Activated B cell treated with CpG ODN at 0.5 μM for 24 hours (primary cell): ENCODE measurements at regions of chr14 and their contacts with region 1.

Region 1: GRCh38 chr14:20632682-20633428 is 8.6 kb downstream of the OR6S1 start:
- DNase-seq: no peak
- ATAC-seq: peak; percentile 72
- H3K4me3 Mint-ChIP-seq: peak overlapping the region; percentile 82
- H3K27ac Mint-ChIP-seq: peak overlapping the region; percentile 89
- H3K4me1 Mint-ChIP-seq: peaks cover 50% of the 10 kb centered on the region
- H3K27me3 Mint-ChIP-seq: peaks cover 30% of the 10 kb centered on the region
- CTCF ChIP-seq: no peak

Region 2: DNA sequence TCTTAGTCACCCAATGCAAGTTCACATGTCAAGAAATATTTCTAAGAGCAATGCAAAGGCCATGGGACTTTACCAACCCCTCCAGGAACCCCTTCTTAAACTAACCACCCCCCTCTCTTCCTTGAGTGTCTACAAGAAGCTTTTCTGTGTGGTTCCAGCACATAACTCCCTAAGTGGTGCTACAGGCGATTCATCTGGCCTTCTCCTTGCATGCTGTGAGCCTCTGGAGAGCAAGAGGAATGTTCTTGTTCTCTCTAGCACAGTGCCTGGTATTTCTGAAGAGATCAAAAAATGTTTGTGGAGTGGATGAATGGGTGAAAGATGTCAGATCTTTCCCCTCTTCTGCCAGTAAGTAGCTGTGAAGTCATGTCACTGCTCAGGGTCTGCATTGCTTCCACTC is 35.8 kb before region 1 on chr14:
- CTCF ChIA-PET with region 1: no interaction called
- POLR2A ChIA-PET with region 1: no interaction called
- intact Hi-C with region 1: no loop called
- DNase-seq: no peak
- ATAC-seq: no peak
- H3K4me3 Mint-ChIP-seq: no peak overlapping the region
- H3K27ac Mint-ChIP-seq: no peak overlapping the region
- H3K4me1 Mint-ChIP-seq: no peaks in the 10 kb centered on the region
- H3K27me3 Mint-ChIP-seq: peaks cover 2% of the 10 kb centered on the region
- CTCF ChIP-seq: no peak

Region 3: GRCh38 chr14:20652996-20653975 is 20.4 kb after region 1 on chr14:
- CTCF ChIA-PET with region 1: no interaction called
- POLR2A ChIA-PET with region 1: no interaction called
- intact Hi-C with region 1: loop called (anchors 1 kb)
- DNase-seq: no peak
- ATAC-seq: no peak
- H3K4me3 Mint-ChIP-seq: peak overlapping the region; percentile 58
- H3K27ac Mint-ChIP-seq: no peak overlapping the region
- H3K4me1 Mint-ChIP-seq: peaks cover 14% of the 10 kb centered on the region
- H3K27me3 Mint-ChIP-seq: peaks cover 50% of the 10 kb centered on the region
- CTCF ChIP-seq: no peak